Astrocyte of the cerebellum (primary cell): ENCODE measurements at regions of chr2 and their contacts with region 1.

Region 1: GRCh38 chr2:4122726-4123125 is 419.4 kb downstream of the DCDC2C start:
- DNase-seq: no peak
- H3K4me3 ChIP-seq: no peak overlapping the region
- CTCF ChIP-seq: no peak

Region 2: GRCh38 chr2:4180631-4181030 is 57.9 kb after region 1 on chr2:
- in situ Hi-C with region 1: loop called (anchors 5 kb)
- DNase-seq: no peak
- H3K4me3 ChIP-seq: no peak overlapping the region
- CTCF ChIP-seq: no peak

Region 3: GRCh38 chr2:4427083-4427482 is 304.4 kb after region 1 on chr2:
- in situ Hi-C with region 1: no loop called
- DNase-seq: no peak
- H3K4me3 ChIP-seq: no peak overlapping the region
- CTCF ChIP-seq: no peak